ENCODE measurements at regions of chr7 and their contacts with region 1.

Region 1: GRCh38 chr7:64183126-64183742 is 23.8 kb upstream of the ZNF735 start:
- DNase-seq: no peak
- H3K4me3 ChIP-seq: no peak overlapping the region
- H3K27ac ChIP-seq: no peak overlapping the region
- H3K4me1 ChIP-seq: no peaks in the 10 kb centered on the region
- H3K27me3 ChIP-seq: peaks cover 15% of the 10 kb centered on the region
- CTCF ChIP-seq: peak; percentile 51 to 69 (median 62)
- EP300 ChIP-seq: no peak
- POLR2A ChIP-seq: no peak

Region 2: GRCh38 chr7:64618785-64619456 is 435.7 kb after region 1 on chr7:
- in situ Hi-C with region 1: loop called (anchors 10 to 25 kb)
- intact Hi-C with region 1: loop called (anchors 1 kb)
- DNase-seq: no peak
- H3K4me3 ChIP-seq: no peak overlapping the region
- H3K27ac ChIP-seq: no peak overlapping the region
- H3K4me1 ChIP-seq: no peaks in the 10 kb centered on the region
- H3K27me3 ChIP-seq: no peaks in the 10 kb centered on the region
- CTCF ChIP-seq: peak; percentile 47 to 60 (median 53)
- EP300 ChIP-seq: no peak
- POLR2A ChIP-seq: no peak

Region 3: GRCh38 chr7:64625114-64626082 is 442.2 kb after region 1 on chr7:
- in situ Hi-C with region 1: loop called (anchors 10 to 25 kb)
- intact Hi-C with region 1: no loop called
- DNase-seq: no peak
- H3K4me3 ChIP-seq: no peak overlapping the region
- H3K27ac ChIP-seq: no peak overlapping the region
- H3K4me1 ChIP-seq: no peaks in the 10 kb centered on the region
- H3K27me3 ChIP-seq: no peaks in the 10 kb centered on the region
- CTCF ChIP-seq: peak; percentile 40 to 83 (median 66)
- EP300 ChIP-seq: no peak
- POLR2A ChIP-seq: no peak